ENCODE measurements at regions of chr13 and their contacts with region 1.

Region 1: GRCh38 chr13:59745392-59745788 is 418.3 kb downstream of the DIAPH3 start:
- DNase-seq: no peak
- H3K4me3 ChIP-seq: no peak overlapping the region
- H3K27ac ChIP-seq: no peak overlapping the region
- H3K4me1 ChIP-seq: no peaks in the 10 kb centered on the region
- H3K27me3 ChIP-seq: no peaks in the 10 kb centered on the region
- CTCF ChIP-seq: no peak
- POLR2A ChIP-seq: no peak

Region 2: DNA sequence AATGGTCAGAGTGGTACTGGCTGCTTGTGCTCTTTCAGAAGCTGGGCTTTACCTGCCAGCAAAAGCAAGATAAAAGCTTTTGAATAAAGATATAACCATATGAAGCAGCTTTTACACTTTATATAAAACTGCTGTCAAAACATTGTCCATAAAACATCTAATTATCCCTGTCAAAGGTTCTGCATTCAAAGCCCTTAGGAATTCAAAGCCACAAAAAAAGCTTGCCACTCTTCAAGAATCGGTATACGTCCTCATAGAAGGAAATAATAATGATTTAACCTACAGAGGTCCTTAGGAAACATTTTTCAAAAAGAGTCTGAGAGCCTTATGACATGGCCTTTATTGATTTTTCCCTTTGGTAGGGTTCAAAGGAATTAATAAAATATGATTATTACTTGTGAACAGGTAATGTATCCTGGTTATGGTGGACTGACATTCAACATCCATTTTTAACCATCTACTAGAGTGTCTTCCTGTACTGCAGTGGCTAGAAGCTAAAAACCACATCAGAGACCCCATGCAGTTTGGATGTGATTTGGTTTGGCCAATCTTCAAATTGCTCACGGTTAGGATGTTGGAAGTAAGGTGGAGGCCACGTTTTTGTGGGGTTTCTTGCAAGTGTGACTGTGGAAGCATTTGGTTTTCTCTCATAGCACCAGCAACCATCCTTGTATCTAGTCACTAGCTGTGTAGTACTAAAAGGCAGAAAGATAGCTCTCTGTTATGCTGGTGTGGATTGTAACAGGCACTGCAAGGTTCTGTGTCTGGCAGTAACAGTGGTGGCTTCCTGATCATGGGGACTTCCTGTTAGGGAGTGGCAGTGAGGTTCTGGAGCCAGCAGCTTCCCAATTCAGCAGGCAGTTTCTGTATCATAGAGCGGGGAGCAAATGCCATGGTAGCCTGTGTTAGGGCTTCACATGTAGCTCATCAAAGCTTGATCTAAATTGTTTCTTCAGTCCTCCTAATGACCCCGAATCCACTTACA is 23.2 kb before region 1 on chr13:
- CTCF ChIA-PET with region 1: interaction called, 10 read pairs
- POLR2A ChIA-PET with region 1: no interaction called
- dilution Hi-C with region 1: no loop called
- intact Hi-C with region 1: no loop called
- DNase-seq: no peak
- H3K4me3 ChIP-seq: no peak overlapping the region
- H3K27ac ChIP-seq: no peak overlapping the region
- H3K4me1 ChIP-seq: no peaks in the 10 kb centered on the region
- H3K27me3 ChIP-seq: no peaks in the 10 kb centered on the region
- CTCF ChIP-seq: no peak
- POLR2A ChIP-seq: no peak